ENCODE measurements at regions of chr15 and their contacts with region 1.

Region 1: DNA sequence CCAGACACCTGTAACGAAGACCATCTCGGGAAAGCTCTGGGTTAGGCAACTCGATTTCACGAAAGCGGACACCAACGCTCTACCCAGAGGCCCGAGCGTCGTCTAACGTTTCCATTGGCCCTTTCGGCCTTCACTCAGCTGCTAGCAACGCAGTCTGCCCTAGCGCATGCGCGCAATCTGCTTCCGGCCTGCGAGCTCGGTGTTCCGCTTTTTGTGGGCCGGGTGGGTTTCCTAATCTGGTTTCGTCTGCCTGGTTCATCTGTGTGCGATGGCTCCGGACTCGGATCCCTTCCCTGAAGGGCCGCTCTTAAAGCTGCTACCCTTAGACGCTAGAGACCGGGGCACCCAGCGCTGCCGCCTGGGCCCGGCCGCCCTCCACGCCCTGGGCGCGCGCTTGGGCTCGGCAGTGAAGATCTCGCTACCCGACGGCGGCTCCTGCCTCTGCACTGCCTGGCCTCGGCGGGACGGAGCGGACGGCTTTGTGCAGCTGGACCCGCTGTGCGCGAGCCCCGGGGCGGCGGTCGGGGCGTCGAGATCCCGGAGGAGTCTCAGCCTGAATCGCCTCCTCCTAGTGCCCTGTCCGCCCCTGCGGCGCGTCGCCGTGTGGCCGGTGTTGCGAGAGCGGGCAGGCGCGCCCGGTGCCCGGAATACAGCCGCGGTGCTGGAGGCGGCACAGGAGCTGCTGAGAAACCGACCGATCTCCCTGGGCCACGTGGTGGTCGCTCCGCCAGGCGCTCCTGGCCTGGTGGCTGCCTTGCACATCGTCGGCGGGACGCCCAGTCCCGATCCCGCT is 24.0 kb upstream of the GATM start:
- DNase-seq: peak; percentile 93
- H3K4me3 Mint-ChIP-seq: peak overlapping the region; percentile 88
- H3K27ac Mint-ChIP-seq: peak overlapping the region; percentile 77
- H3K4me1 Mint-ChIP-seq: peaks cover 32% of the 10 kb centered on the region
- H3K27me3 Mint-ChIP-seq: peaks cover 4% of the 10 kb centered on the region

Region 2: GRCh38 chr15:45166834-45167630 is 235.3 kb before region 1 on chr15:
- intact Hi-C with region 1: loop called (anchors 1 kb)
- DNase-seq: peak; percentile 79
- H3K4me3 Mint-ChIP-seq: peak overlapping the region; percentile 64
- H3K27ac Mint-ChIP-seq: peak overlapping the region; percentile 85
- H3K4me1 Mint-ChIP-seq: peaks cover 14% of the 10 kb centered on the region
- H3K27me3 Mint-ChIP-seq: no peaks in the 10 kb centered on the region

Region 3: DNA sequence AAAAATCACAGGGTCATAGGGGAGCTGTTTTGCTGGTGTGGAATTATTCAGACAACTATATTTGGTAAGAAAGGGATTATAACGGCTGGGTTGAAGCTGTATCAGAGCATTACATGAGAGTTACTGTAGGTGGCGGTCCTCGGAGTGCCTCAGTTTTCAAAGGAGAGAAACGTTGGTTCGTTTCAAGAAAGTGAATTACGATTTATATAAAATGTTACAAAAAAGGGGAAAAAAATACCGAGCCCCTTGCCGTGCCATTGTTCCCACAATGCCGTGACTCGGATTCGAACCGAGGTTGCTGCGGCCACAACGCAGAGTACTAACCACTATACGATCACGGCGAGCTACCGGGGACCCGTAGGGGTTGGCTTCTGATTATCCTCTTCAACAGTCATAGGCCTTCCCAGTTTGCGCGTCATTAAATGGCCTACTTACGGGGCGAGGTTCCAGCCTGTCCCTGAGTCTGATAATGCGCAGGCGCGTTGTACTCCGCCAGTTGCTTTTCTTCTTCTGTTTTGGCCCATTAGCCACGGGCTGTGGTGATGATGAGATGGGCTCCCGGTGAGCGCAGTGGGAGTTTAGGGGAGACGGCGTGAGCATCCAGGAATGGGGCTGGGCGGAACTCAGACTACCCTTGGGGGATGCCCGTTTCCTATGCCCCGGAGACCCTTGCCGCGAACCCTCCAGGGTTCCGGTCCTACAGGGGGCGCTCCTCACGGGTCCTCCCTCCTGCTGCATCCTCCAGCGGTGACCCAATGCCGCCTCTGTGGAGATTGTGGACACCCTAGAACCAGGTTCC is 203.8 kb before region 1 on chr15:
- intact Hi-C with region 1: loop called (anchors 2 kb)
- DNase-seq: peak; percentile 95
- H3K4me3 Mint-ChIP-seq: no peak overlapping the region
- H3K27ac Mint-ChIP-seq: no peak overlapping the region
- H3K4me1 Mint-ChIP-seq: peaks cover 14% of the 10 kb centered on the region
- H3K27me3 Mint-ChIP-seq: no peaks in the 10 kb centered on the region

Region 4: DNA sequence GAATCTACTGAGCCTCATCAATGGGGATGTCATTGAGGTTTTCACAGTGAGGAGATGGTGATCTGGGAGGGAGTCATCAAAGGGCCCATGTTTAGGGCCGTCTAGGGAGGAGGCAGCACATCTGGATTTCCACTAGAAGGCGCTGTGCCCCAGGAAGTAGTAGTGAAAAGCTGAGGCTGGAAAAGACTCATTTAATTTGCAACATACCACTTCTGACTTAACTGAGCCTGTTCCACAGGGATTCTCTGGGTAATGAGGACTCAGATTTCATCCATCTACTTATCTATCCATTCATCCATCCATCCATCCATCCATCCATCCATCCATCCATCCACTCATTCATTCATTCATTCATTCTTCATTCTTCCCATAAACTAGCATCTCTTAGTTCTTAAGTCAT is 197.2 kb before region 1 on chr15:
- intact Hi-C with region 1: loop called (anchors 1 kb)
- DNase-seq: peak; percentile 57
- H3K4me3 Mint-ChIP-seq: no peak overlapping the region
- H3K27ac Mint-ChIP-seq: no peak overlapping the region
- H3K4me1 Mint-ChIP-seq: peaks cover 6% of the 10 kb centered on the region
- H3K27me3 Mint-ChIP-seq: peaks cover 20% of the 10 kb centered on the region

Region 5: GRCh38 chr15:45307230-45307924 is 95.0 kb before region 1 on chr15:
- intact Hi-C with region 1: loop called (anchors 5 kb)
- DNase-seq: no peak
- H3K4me3 Mint-ChIP-seq: peak overlapping the region; percentile 45
- H3K27ac Mint-ChIP-seq: no peak overlapping the region
- H3K4me1 Mint-ChIP-seq: peaks cover 7% of the 10 kb centered on the region
- H3K27me3 Mint-ChIP-seq: peaks cover 22% of the 10 kb centered on the region